Heart left ventricle (tissue), 16 donors: ENCODE measurements at regions of chr6 and their contacts with region 1.

Region 1: GRCh38 chr6:52155791-52156576 is 30.2 kb upstream of the IL17A start:
- DNase-seq: no peak
- ATAC-seq: peak in 1 of 4 donors; percentile 34
- H3K4me3 ChIP-seq: no peak overlapping the region
- H3K27ac ChIP-seq: peak overlapping the region in 1 of 12 donors; percentile 17
- H3K4me1 ChIP-seq: peaks cover 0 to 3% (median 0%) of the 10 kb centered on the region in 12 donors
- H3K27me3 ChIP-seq: no peaks in the 10 kb centered on the region
- CTCF ChIP-seq: no peak
- POLR2A ChIP-seq: no peak

Region 2: GRCh38 chr6:52195886-52196285 is 39.9 kb after region 1 on chr6:
- intact Hi-C with region 1: loop called in 1 of 10 experiments (anchors 2 kb)
- DNase-seq: no peak
- ATAC-seq: no peak
- H3K4me3 ChIP-seq: no peak overlapping the region
- H3K27ac ChIP-seq: no peak overlapping the region
- H3K4me1 ChIP-seq: no peaks in the 10 kb centered on the region
- H3K27me3 ChIP-seq: no peaks in the 10 kb centered on the region
- CTCF ChIP-seq: no peak
- POLR2A ChIP-seq: no peak